ENCODE measurements at regions of chr5 and their contacts with region 1.

Region 1: DNA sequence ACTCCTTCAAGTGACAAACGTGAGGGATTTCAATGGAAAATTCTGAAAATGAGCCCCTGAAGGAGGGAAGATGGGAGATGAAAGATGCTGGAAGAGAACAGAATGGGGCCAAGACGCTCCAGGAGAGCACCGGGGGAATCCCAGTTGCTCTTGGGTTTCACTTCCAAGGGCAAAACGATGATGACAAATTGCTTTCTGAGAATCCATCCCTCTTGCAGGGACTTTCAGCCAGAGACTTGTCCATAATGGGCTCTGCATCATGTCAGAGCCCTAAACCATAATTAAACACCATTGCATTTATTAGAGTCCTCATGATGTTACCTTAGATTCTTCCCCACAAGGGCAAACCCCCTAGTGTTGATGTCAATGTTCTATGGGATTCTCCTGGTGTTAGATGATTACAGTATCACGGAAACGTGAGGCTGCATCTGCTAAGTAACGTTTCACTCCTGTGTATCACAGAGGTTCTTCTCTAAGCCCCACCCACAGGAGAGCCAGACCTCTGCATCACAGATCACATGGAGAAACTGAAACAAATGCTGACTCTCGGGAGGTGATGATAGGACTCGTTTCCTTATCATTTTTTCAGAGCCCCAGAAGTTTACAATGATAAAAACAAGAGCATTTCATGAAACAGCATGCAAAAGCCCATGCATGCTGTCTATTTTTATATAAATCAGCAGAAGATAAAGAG is 114.4 kb downstream of the TENT4A start:
- DNase-seq: peak; percentile 68
- H3K4me3 Mint-ChIP-seq: peak overlapping the region; percentile 50
- H3K27ac Mint-ChIP-seq: peak overlapping the region; percentile 55
- H3K4me1 Mint-ChIP-seq: peaks cover 52% of the 10 kb centered on the region
- H3K27me3 Mint-ChIP-seq: peaks cover 15% of the 10 kb centered on the region

Region 2: DNA sequence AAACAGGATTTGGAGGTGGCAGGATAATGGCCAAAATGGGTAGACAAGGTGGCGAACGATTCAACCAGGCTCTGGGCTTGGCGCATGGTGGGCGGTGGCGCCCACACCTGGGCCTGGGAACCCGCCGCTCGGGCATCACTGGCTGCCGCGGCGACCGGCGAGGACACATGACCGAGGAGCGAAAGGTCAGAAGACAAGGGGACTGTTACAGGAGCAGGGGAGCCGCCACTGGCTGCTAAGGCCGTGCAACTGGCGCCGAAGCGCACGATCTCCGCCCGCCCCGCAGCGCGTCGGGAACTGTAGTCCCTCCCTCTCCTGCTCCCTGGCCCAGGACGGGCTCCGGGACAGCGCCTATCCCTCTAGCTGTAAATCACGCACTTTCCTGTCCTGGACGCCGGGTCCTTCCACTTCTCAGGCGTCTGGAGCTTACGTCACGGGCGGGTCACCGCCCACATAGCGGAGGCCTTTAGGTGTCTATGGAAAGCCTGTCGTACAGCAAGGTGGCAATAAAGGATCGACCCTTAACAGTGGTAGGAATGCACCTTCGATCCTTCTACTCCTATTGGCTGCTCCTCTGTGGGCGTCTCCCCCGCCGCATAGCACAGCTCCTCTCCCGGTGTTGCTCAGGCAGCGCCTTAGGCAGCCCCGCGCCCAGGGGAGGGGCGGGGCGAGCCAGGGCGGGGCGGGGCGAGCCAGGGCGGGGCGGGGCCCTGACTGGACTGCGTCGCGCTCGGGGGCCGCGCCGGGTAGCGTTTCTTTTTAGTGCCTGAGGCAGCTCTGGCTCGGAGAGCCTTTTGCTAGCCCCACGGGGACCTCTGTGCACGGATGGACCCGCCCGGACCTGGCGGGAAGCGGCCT is 1405.5 kb before region 1 on chr5 and contains the start of gene ICE1:
- CTCF ChIA-PET with region 1: no interaction called
- POLR2A ChIA-PET with region 1: no interaction called
- intact Hi-C with region 1: loop called (anchors 5 kb)
- DNase-seq: peak; percentile 96
- H3K4me3 Mint-ChIP-seq: peak within 1 kb of the TSS; percentile 96
- H3K27ac Mint-ChIP-seq: peak within 1 kb of the TSS; percentile 95
- H3K4me1 Mint-ChIP-seq: peaks cover 14% of the 10 kb centered on the region
- H3K27me3 Mint-ChIP-seq: no peaks in the 10 kb centered on the region
- total RNA-seq, gene ICE1: 25.5 to 26.0 TPM

Region 3: GRCh38 chr5:6377905-6378765 is 449.5 kb before region 1 on chr5 and contains the start of gene MED10:
- CTCF ChIA-PET with region 1: no interaction called
- POLR2A ChIA-PET with region 1: no interaction called
- intact Hi-C with region 1: loop called (anchors 1 kb)
- DNase-seq: peak; percentile 98
- H3K4me3 Mint-ChIP-seq: peak within 1 kb of the TSS; percentile 92
- H3K27ac Mint-ChIP-seq: peak within 1 kb of the TSS; percentile 98
- H3K4me1 Mint-ChIP-seq: peaks cover 37% of the 10 kb centered on the region
- H3K27me3 Mint-ChIP-seq: no peaks in the 10 kb centered on the region
- total RNA-seq, gene MED10: 49.8 to 51.6 TPM

Region 4: GRCh38 chr5:6632917-6633468 is 194.7 kb before region 1 on chr5 and contains the starts of genes NSUN2 and SRD5A1:
- CTCF ChIA-PET with region 1: no interaction called
- POLR2A ChIA-PET with region 1: no interaction called
- intact Hi-C with region 1: loop called (anchors 1 kb)
- DNase-seq: peak; percentile 92
- H3K4me3 Mint-ChIP-seq: peak within 1 kb of the TSS; percentile 97
- H3K27ac Mint-ChIP-seq: peak within 1 kb of the TSS; percentile 95
- H3K4me1 Mint-ChIP-seq: peaks cover 40% of the 10 kb centered on the region
- H3K27me3 Mint-ChIP-seq: no peaks in the 10 kb centered on the region
- total RNA-seq, gene NSUN2: 78.5 to 86.7 TPM
- total RNA-seq, gene SRD5A1: 9.5 to 11.0 TPM

Region 5: GRCh38 chr5:6743161-6743560 is 84.5 kb before region 1 on chr5:
- CTCF ChIA-PET with region 1: no interaction called
- POLR2A ChIA-PET with region 1: no interaction called
- intact Hi-C with region 1: no loop called
- DNase-seq: no peak
- H3K4me3 Mint-ChIP-seq: no peak overlapping the region
- H3K27ac Mint-ChIP-seq: no peak overlapping the region
- H3K4me1 Mint-ChIP-seq: peaks cover 10% of the 10 kb centered on the region
- H3K27me3 Mint-ChIP-seq: no peaks in the 10 kb centered on the region

Region 6: DNA sequence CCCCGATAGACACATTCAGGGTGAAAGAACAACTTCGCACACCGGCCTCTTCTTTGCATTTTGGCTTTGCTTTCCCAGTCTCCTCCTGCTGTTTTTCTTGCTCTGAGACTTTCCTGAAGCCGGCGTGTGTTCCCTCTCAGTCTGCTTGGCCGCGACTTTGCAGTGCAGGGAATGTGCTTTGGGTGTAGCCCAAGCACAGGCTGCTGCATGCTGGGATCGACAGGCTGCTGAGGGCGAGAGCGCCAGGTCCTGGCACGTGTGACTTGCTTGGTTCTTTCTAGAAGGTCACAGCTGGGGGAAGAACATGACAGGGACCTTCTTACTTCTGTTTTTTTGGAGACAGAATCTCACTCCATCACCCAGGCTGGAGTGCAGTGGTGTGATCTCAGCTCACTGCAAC is 73.8 kb before region 1 on chr5:
- CTCF ChIA-PET with region 1: no interaction called
- POLR2A ChIA-PET with region 1: no interaction called
- intact Hi-C with region 1: no loop called
- DNase-seq: no peak
- H3K4me3 Mint-ChIP-seq: no peak overlapping the region
- H3K27ac Mint-ChIP-seq: no peak overlapping the region
- H3K4me1 Mint-ChIP-seq: no peaks in the 10 kb centered on the region
- H3K27me3 Mint-ChIP-seq: no peaks in the 10 kb centered on the region

Region 7: DNA sequence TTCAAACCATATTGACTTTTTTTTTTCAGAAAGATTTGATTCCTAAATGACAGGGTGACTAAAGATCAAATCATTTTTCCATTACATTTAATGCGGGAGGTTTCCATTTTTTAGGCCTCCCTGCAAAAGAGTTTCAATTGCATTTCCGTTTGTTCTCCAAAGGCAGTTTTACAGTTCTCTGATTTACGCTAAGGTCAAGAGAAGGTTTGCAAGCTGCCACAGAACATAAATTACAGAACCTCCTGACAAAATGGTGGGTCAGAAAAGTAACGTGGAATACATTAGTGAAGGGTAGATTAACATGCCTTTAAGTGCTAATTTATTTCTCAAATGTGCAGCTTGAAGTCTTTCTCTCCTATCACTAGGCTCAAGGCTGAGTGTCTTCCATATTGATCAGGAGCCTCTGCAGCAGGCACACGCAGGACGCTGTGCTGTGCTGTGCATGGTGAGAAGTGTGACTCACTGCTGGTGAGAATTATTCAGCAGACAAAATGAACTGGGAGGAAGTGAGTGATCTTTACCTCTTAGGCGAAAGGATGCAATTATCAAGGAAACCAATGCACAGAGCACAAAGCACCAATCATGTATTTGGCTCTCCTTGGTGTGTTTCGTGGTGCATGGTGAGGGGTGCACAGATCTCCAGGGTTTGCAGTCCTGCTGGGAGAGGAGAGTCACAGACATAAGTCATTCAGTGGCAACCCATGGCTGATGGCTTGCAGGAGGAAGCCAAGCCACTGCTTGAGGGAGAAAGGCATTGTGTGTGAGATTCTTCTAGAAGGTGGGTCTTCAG is 21.8 kb after region 1 on chr5:
- CTCF ChIA-PET with region 1: no interaction called
- POLR2A ChIA-PET with region 1: no interaction called
- intact Hi-C with region 1: loop called (anchors 1 kb)
- DNase-seq: peak; percentile 41
- H3K4me3 Mint-ChIP-seq: no peak overlapping the region
- H3K27ac Mint-ChIP-seq: no peak overlapping the region
- H3K4me1 Mint-ChIP-seq: peaks cover 17% of the 10 kb centered on the region
- H3K27me3 Mint-ChIP-seq: peaks cover 3% of the 10 kb centered on the region

Region 8: DNA sequence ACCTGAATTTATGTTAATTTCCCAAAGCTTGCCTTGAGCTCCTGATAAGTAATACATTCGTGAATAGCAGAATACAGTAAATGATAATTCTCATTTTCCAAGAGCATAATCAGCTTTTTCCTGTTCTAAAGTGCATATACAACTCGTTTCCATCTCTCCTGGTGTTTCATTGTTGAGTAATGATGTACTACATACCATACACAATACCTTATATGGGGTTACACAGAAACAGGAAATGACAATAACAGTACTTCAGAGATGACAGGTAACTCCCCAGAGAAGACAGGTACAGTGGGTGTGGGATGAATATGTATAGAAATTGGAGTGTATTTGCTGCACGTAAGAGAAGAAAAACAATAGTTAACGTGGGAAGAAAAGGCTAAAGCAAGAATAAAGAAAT is 172.6 kb after region 1 on chr5:
- CTCF ChIA-PET with region 1: no interaction called
- POLR2A ChIA-PET with region 1: no interaction called
- intact Hi-C with region 1: loop called (anchors 1 kb)
- DNase-seq: no peak
- H3K4me3 Mint-ChIP-seq: no peak overlapping the region
- H3K27ac Mint-ChIP-seq: no peak overlapping the region
- H3K4me1 Mint-ChIP-seq: peaks cover 3% of the 10 kb centered on the region
- H3K27me3 Mint-ChIP-seq: peaks cover 10% of the 10 kb centered on the region

Measured in activated CD4-positive, alpha-beta memory T cell treated with anti-CD3 and anti-CD28 coated beads for 36 hours (primary cell).